Ascending aorta (tissue), 2 donors: ENCODE measurements at regions of chr19 and their contacts with region 1.

Region 1: GRCh38 chr19:5904352-5905113 is at the start of gene VMAC:
- DNase-seq: peak; percentile 100
- H3K4me3 ChIP-seq: peak within 1 kb of the TSS; percentile 98 to 99
- H3K27ac ChIP-seq: peak within 1 kb of the TSS; percentile 63 to 93
- H3K4me1 ChIP-seq: peaks cover 5 to 25% of the 10 kb centered on the region in 2 donors
- H3K27me3 ChIP-seq: no peaks in the 10 kb centered on the region
- CTCF ChIP-seq: no peak
- total RNA-seq, gene VMAC: 15.2 TPM

Region 2: GRCh38 chr19:5790573-5791520 is 113.7 kb before region 1 on chr19 and contains the start of gene DUS3L:
- intact Hi-C with region 1: loop called (anchors 1 kb)
- DNase-seq: peak; percentile 89 to 99
- H3K4me3 ChIP-seq: peak within 1 kb of the TSS; percentile 63 to 77
- H3K27ac ChIP-seq: peak within 1 kb of the TSS; percentile 86 to 97
- H3K4me1 ChIP-seq: peaks cover 3 to 5% of the 10 kb centered on the region in 2 donors
- H3K27me3 ChIP-seq: no peaks in the 10 kb centered on the region
- CTCF ChIP-seq: no peak
- total RNA-seq, gene DUS3L: 13.1 TPM

Region 3: GRCh38 chr19:5891938-5892771 is 12.4 kb before region 1 on chr19:
- intact Hi-C with region 1: no loop called
- DNase-seq: no peak
- H3K4me3 ChIP-seq: no peak overlapping the region
- H3K27ac ChIP-seq: no peak overlapping the region
- H3K4me1 ChIP-seq: peaks cover 8 to 27% of the 10 kb centered on the region in 2 donors
- H3K27me3 ChIP-seq: no peaks in the 10 kb centered on the region
- CTCF ChIP-seq: peak in 2 of 3 experiments; percentile 42 to 51

Region 4: GRCh38 chr19:5953680-5954213 is 49.2 kb after region 1 on chr19:
- intact Hi-C with region 1: loop called (anchors 2 kb)
- DNase-seq: no peak
- H3K4me3 ChIP-seq: peak overlapping the region in 1 of 2 donors; percentile 49
- H3K27ac ChIP-seq: peak overlapping the region; percentile 74 to 77
- H3K4me1 ChIP-seq: peaks cover 18 to 50% of the 10 kb centered on the region in 2 donors
- H3K27me3 ChIP-seq: no peaks in the 10 kb centered on the region
- CTCF ChIP-seq: no peak

Region 5: DNA sequence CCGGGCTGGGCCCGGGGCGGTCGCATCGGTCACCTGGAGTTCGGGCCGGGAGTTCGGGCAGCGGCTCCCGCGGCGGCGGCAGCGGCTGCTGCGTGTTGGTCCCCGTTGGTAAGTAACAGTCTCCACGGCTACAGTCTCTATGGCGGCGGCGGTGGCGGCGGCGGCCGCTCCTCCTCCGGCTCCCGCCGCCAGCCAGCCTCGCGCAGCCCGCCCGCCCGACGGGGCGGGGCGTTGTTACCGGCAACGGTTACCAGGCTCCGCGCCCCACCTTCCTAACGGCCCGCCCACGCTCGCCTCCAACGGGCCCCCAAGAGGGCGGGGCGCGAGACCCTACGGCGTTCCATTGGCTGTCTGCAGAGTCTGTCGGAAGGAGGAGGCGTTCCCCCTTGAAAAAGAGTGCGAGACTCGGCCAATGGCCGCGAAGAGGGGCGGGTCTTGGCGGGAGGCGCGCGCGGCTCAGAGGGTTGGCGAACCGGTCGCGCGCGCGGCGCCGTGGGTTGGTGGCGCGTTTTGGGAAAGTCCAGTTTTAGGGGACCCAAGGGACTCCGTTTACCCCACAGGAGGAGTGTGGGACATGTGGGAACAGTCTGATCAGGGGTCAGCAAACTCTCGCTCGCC is 205.9 kb after region 1 on chr19 and contains the start of gene RFX2:
- intact Hi-C with region 1: loop called (anchors 5 kb)
- DNase-seq: peak; percentile 98 to 100
- H3K4me3 ChIP-seq: peak within 1 kb of the TSS; percentile 95 to 97
- H3K27ac ChIP-seq: peak within 1 kb of the TSS; percentile 90 to 94
- H3K4me1 ChIP-seq: peaks cover 3 to 4% of the 10 kb centered on the region in 2 donors
- H3K27me3 ChIP-seq: no peaks in the 10 kb centered on the region
- CTCF ChIP-seq: no peak
- total RNA-seq, gene RFX2: 107 TPM